ENCODE measurements at regions of chr2 and their contacts with region 1.

Region 1: GRCh38 chr2:64144057-64145013 is at the start of gene PELI1:
- DNase-seq: peak; percentile 95
- H3K4me3 ChIP-seq: peak within 1 kb of the TSS; percentile 82 to 95
- H3K27ac ChIP-seq: peak within 1 kb of the TSS; percentile 76 to 91
- H3K4me1 ChIP-seq: peaks cover 14 to 17% of the 10 kb centered on the region in 2 experiments; a peak in 3 of 4 replicates
- H3K27me3 ChIP-seq: no peaks in the 10 kb centered on the region
- CTCF ChIP-seq: peak; percentile 37
- EP300 ChIP-seq: no peak
- RAD21 ChIP-seq: peak; percentile 41; the same call in 1 of the 2 replicates
- polyA plus RNA-seq, gene PELI1: 4.2 and 5.6 TPM in 2 replicates

Region 2: DNA sequence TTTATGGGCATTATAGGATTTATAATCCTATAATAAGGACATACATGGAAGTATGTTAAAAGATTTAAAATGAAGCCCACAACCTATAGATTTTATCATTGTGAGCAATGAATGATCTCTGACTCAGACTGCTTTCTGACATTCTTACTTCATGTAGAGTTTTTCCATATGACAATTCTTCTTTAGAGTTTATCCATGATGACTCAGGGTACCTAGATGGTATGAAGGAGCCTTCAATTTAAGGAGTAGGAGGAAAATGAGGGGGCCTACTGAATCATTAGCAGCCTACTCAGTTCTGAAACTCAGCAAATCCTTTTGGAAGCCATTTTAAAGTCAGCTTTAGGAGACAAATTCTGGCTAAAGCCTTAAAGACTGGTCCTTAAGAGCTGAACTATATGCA is 10.5 kb before region 1 on chr2:
- CTCF ChIA-PET with region 1: interaction called, 13 read pairs
- POLR2A ChIA-PET with region 1: no interaction called
- DNase-seq: no peak
- H3K4me3 ChIP-seq: no peak overlapping the region
- H3K27ac ChIP-seq: peak overlapping the region; percentile 58 to 83; a peak in 3 of 4 replicates
- H3K4me1 ChIP-seq: peaks cover 17 to 31% of the 10 kb centered on the region in 2 experiments; a peak in 3 of 4 replicates
- H3K27me3 ChIP-seq: no peaks in the 10 kb centered on the region
- CTCF ChIP-seq: no peak
- EP300 ChIP-seq: peak in 1 of 2 experiments; percentile 72; a peak in 2 of 4 replicates
- RAD21 ChIP-seq: no peak

Region 3: DNA sequence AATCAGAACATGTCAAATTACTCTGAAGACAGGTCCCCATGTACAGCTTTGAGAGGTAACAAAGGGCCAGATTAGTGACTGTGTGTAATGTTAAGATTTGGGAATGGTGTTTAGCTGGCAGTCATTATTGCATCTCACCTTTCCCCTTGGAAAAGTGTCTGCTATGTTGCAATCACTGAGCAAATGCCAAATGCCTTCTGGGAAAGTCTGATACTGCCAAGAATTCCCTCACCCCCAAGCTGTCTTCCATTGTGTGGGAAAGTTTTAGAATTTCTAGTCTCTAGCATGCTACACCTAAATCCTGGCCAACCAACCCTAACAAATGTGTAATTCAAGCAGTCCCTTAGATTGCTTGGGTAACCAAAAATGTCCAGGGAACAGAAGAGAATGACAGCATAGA is 13.5 kb after region 1 on chr2:
- CTCF ChIA-PET with region 1: no interaction called
- POLR2A ChIA-PET with region 1: no interaction called
- DNase-seq: no peak
- H3K4me3 ChIP-seq: no peak overlapping the region
- H3K27ac ChIP-seq: no peak overlapping the region
- H3K4me1 ChIP-seq: peaks cover 0 to 3% of the 10 kb centered on the region in 2 experiments; a peak in 2 of 4 replicates
- H3K27me3 ChIP-seq: no peaks in the 10 kb centered on the region
- CTCF ChIP-seq: no peak
- EP300 ChIP-seq: no peak
- RAD21 ChIP-seq: no peak

Region 4: GRCh38 chr2:64192125-64192479 is 47.8 kb after region 1 on chr2:
- CTCF ChIA-PET with region 1: no interaction called
- POLR2A ChIA-PET with region 1: no interaction called
- DNase-seq: no peak
- H3K4me3 ChIP-seq: no peak overlapping the region
- H3K27ac ChIP-seq: no peak overlapping the region
- H3K4me1 ChIP-seq: peaks cover 0 to 2% of the 10 kb centered on the region in 2 experiments; a peak in 2 of 4 replicates
- H3K27me3 ChIP-seq: no peaks in the 10 kb centered on the region
- CTCF ChIP-seq: no peak
- EP300 ChIP-seq: no peak
- RAD21 ChIP-seq: no peak